HEK293 (cell line): ENCODE measurements at regions of chr19 and their contacts with region 1.

Region 1: DNA sequence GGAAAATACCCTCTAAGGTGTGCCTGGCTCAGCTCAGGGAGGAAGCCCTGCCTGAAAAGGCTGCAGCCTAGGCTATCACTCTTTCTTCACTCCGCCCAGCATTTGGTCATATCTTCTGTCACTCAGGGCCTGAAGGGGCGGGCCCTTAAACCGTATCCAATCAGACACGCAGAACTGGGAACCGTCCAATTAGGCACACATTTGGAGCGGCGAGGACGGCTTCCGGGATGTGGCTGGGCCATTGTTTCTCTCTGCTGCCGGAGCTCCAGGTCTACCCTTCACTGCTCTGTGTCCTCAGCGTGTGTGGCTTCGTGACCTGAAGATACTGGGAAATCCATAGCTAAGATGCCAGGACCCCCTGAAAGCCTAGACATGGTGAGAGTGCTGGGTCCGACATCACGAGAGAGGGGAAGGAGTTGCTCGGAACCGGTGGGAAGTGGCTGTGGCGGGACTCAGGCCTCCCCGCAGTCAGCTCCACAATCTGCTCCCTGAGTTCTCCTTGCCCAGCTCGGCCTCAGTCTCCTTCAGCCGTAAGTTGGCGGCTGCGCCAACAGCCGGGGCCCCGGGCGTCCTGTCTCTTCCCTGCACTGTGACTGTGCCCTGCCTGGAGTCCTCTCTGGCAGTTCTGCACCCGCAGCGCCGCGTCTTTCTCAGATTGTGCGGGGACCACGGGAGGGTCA is at the start of gene ZNF493:
- H3K4me3 ChIP-seq: peak within 1 kb of the TSS; percentile 97
- H3K27ac ChIP-seq: no peak within 1 kb of the TSS; the same call in 1 of the 2 replicates
- H3K4me1 ChIP-seq: no peaks in the 10 kb centered on the region
- CTCF ChIP-seq: no peak

Region 2: DNA sequence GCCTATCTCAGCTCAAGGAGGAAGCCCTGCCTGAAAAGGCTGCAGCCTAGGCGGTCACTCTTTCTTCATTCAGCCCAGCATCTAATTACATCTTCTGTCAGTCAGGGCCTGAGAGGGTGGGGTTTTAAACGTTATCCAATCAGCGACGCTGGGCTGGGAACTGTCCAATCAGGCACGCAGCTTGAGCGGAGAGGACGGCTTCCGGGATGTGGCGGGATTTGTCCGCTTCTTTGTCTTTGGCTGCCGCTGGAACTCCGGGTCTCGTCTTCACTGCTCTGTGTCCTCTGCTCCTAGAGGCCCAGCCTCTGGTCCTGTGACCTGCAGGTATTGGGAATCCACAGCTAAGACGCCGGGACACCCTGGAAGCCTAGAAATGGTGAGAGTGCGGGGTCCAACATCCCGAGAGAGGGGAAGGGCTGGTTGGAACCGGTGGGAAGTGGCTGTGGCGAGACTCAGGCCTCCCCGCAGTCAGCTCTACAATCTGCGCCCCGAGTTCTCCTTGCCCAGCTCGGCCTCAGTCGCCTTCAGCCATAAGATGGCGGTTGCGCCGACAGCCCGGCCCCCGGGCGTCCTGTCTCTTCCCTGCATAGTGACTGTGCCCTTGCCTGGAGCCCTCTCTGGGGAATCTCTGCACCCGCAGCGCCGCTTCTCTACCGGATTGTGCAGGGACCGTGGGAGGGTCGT is 38.1 kb before region 1 on chr19 and contains the start of gene ZNF738:
- CTCF ChIA-PET with region 1: no interaction called
- POLR2A ChIA-PET with region 1: interaction called, 13 read pairs
- H3K4me3 ChIP-seq: peak within 1 kb of the TSS; percentile 79
- H3K27ac ChIP-seq: peak within 1 kb of the TSS; percentile 80
- H3K4me1 ChIP-seq: no peaks in the 10 kb centered on the region
- CTCF ChIP-seq: no peak

Region 3: GRCh38 chr19:21434967-21435544 is 38.0 kb after region 1 on chr19:
- CTCF ChIA-PET with region 1: no interaction called
- POLR2A ChIA-PET with region 1: no interaction called
- H3K4me3 ChIP-seq: no peak overlapping the region
- H3K27ac ChIP-seq: no peak overlapping the region
- H3K4me1 ChIP-seq: no peaks in the 10 kb centered on the region
- CTCF ChIP-seq: no peak

Region 4: DNA sequence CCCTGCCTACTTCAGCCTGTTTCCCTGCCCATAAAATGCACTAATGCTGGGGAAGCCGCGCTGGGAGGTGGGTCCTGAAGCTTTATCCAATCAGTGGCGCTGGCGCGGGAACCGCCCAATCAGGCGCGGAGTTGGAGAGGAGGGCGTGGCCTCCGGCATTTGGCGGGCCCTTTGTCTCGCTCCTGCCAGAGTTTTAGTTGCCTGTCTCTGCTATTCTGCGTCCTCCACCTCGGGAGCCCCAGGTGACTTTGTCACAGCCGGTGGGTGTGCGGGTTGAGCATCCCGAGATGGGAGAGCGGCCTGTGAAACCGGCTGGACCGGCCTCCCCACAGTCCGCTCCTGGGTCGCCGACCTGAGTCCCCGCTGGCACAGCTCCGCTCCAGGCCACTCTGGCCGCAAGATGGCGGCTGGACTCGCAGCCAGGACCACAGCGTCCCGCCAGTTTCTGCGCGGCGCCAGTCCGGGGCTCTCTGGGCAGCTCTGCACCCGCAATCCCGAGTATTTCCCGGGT is 77.7 kb after region 1 on chr19:
- CTCF ChIA-PET with region 1: no interaction called
- POLR2A ChIA-PET with region 1: no interaction called
- H3K4me3 ChIP-seq: peak overlapping the region; percentile 37
- H3K27ac ChIP-seq: no peak overlapping the region
- H3K4me1 ChIP-seq: no peaks in the 10 kb centered on the region
- CTCF ChIP-seq: no peak

Region 5: GRCh38 chr19:21505459-21506451 is 108.7 kb after region 1 on chr19 and contains the start of gene ZNF429:
- CTCF ChIA-PET with region 1: no interaction called
- POLR2A ChIA-PET with region 1: interaction called, 10 read pairs
- H3K4me3 ChIP-seq: peak within 1 kb of the TSS; percentile 81
- H3K27ac ChIP-seq: no peak within 1 kb of the TSS
- H3K4me1 ChIP-seq: no peaks in the 10 kb centered on the region
- CTCF ChIP-seq: peak; percentile 13; the same call in 1 of the 2 replicates